Mammary epithelial cell (primary cell): ENCODE measurements at regions of chrX and their contacts with region 1.

Region 1: DNA sequence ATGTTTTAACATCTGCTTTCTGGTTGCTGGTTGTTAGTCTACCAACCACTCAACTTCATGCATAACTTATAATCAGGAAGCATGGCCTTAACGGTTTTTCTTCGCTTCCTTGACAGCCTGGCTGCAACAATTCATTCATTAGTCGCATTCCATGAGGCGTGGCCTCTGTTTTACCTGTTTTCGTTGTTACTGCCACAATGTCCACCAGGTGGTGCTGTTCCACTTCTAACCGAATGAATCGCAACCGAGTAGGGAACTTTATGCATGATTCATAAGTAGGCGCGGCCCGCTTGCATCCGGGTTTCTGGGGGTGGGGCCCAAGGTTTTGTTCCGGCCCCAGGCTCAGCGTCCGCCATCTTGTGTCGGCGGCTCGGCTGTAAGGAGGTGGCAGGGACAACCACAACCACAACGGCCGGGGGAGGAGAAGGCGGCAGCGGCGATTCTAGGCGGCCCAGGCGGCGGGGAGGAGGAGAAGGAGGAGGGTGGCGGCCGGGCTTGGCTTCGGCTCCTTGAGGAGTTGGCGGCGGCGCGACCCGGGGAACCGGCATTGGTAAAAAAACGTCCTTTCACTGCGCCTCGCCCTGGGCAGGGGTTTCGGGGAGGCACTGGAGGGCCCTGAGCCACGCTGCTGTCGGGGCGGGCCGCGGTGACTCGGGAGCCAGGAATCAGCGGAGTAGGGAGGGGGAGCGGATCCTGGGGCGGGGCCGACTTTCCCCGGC is at the start of gene UBA1:
- DNase-seq: peak; percentile 96
- H3K4me3 ChIP-seq: peak within 1 kb of the TSS; percentile 74 to 92 (median 76)
- H3K27ac ChIP-seq: peak within 1 kb of the TSS; percentile 81
- H3K4me1 ChIP-seq: peaks cover 44% of the 10 kb centered on the region
- H3K27me3 ChIP-seq: no peaks in the 10 kb centered on the region
- CTCF ChIP-seq: peak; percentile 79 to 87
- total RNA-seq, gene UBA1: 231 to 360 TPM

Region 2: GRCh38 chrX:47112316-47112954 is 81.2 kb before region 1 on chrX:
- CTCF ChIA-PET with region 1: no interaction called
- dilution Hi-C with region 1: no loop called
- in situ Hi-C with region 1: no loop called
- intact Hi-C with region 1: loop called (anchors 1 kb)
- DNase-seq: peak; percentile 55
- H3K4me3 ChIP-seq: no peak overlapping the region
- H3K27ac ChIP-seq: no peak overlapping the region
- H3K4me1 ChIP-seq: no peaks in the 10 kb centered on the region
- H3K27me3 ChIP-seq: no peaks in the 10 kb centered on the region
- CTCF ChIP-seq: peak in 1 of 2 donors; percentile 34

Region 3: GRCh38 chrX:47217642-47218279 is 24.1 kb after region 1 on chrX:
- CTCF ChIA-PET with region 1: no interaction called
- dilution Hi-C with region 1: no loop called
- in situ Hi-C with region 1: no loop called
- intact Hi-C with region 1: loop called (anchors 1 kb)
- DNase-seq: peak; percentile 100
- H3K4me3 ChIP-seq: peak overlapping the region; percentile 63 to 68 (median 68)
- H3K27ac ChIP-seq: peak overlapping the region; percentile 95
- H3K4me1 ChIP-seq: peaks cover 26% of the 10 kb centered on the region
- H3K27me3 ChIP-seq: no peaks in the 10 kb centered on the region
- CTCF ChIP-seq: no peak

Region 4: DNA sequence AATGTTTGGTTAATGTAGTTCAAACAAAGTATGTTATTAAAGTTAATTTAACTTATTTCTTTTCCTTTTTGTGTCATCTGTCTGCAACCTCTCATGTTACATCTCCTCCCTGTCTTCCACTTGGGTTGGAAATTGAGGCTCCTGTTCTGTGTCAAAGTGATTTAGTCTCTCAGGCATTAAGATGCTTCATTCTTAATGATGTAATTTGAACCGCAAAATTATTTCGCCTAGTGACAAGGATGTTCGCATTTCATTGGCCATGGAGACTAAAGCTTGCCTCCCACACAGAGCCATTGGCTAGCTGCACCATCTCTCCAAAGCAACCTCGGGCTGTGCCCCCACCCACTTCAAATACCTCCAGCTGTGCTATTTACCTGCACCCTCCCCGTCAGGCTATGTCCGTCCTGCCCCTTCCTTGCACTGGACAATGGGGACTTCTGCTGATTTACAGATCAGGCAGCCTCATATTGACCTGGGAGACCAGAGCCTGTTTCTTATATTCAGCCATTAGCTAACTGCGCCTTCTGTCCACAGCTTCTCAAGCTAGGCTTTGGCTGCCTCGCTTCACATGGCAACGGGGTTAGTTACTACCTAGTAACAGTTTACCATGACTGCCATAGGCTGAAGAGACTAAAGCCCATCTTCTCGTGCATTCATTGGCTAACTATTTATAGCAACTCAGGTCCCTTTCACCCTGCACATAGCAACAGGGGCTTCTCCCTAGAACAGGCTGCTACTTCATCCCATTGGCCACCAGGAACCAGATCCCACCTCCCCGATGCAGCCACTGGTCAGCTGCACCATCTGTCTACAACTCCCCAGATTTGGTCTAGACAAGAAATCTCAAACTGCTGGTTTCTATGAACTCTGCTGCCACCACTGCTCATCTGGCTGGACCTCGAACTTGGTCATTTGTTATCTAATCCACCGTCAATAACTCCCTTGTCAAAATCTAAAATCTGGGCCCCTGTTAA is 168.2 kb after region 1 on chrX:
- CTCF ChIA-PET with region 1: no interaction called
- dilution Hi-C with region 1: no loop called
- in situ Hi-C with region 1: no loop called
- intact Hi-C with region 1: no loop called
- DNase-seq: peak; percentile 86
- H3K4me3 ChIP-seq: peak overlapping the region; percentile 11 to 44 (median 22)
- H3K27ac ChIP-seq: peak overlapping the region; percentile 65
- H3K4me1 ChIP-seq: no peaks in the 10 kb centered on the region
- H3K27me3 ChIP-seq: no peaks in the 10 kb centered on the region
- CTCF ChIP-seq: peak in 1 of 2 donors; percentile 11

Region 5: DNA sequence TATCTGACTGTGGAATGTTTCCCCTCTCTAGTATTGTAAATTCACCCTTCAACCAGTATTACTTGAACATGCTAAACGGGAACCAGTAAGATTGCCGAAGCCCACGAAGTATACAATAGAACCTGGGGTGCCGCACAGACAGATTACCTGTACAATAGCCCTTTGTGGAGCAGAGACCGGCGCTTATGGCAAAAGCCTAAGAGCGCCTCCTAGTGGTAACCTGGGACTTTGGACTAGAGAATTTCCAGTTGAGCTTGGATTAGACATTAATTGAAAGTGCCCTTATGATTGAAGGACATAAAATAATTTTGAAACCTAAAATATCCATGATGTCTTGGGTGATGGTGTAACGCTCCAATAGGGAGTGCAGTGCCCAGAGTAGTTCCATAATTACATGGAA is 190.9 kb after region 1 on chrX:
- CTCF ChIA-PET with region 1: no interaction called
- dilution Hi-C with region 1: no loop called
- in situ Hi-C with region 1: loop called in 1 of 2 experiments (anchors 10 kb)
- intact Hi-C with region 1: loop called (anchors 1 kb)
- DNase-seq: peak; percentile 56
- H3K4me3 ChIP-seq: no peak overlapping the region
- H3K27ac ChIP-seq: no peak overlapping the region
- H3K4me1 ChIP-seq: no peaks in the 10 kb centered on the region
- H3K27me3 ChIP-seq: no peaks in the 10 kb centered on the region
- CTCF ChIP-seq: peak; percentile 63 to 74

Region 6: DNA sequence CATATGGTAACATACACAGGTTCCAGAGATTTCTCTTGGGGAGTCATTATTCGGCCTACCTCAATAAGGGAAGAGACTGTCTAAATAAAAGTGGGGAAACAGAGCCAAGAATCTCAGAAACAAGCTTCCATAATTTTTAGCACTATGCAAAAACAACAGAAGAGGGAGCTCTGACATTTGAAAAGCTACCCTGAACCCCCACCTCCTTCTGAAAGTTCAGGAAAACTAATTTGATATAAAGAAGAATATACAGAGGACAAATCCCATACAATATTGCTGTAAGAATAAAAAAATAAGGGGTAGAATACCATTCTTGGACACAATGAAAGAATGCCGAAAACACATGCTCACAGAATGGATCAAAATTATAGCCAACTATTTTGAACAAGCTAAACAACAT is 303.6 kb after region 1 on chrX:
- CTCF ChIA-PET with region 1: interaction called, 6 read pairs
- dilution Hi-C with region 1: no loop called
- in situ Hi-C with region 1: no loop called
- intact Hi-C with region 1: loop called (anchors 5 kb)
- DNase-seq: no peak
- H3K4me3 ChIP-seq: no peak overlapping the region
- H3K27ac ChIP-seq: no peak overlapping the region
- H3K4me1 ChIP-seq: peaks cover 6% of the 10 kb centered on the region
- H3K27me3 ChIP-seq: no peaks in the 10 kb centered on the region
- CTCF ChIP-seq: peak in 1 of 2 donors; percentile 49

Region 7: GRCh38 chrX:47836164-47837072 is 642.8 kb after region 1 on chrX and contains the start of gene ZNF81:
- CTCF ChIA-PET with region 1: no interaction called
- dilution Hi-C with region 1: no loop called
- in situ Hi-C with region 1: no loop called
- intact Hi-C with region 1: loop called (anchors 10 kb)
- DNase-seq: peak; percentile 94
- H3K4me3 ChIP-seq: peak within 1 kb of the TSS; percentile 55 to 59 (median 56)
- H3K27ac ChIP-seq: peak within 1 kb of the TSS; percentile 59
- H3K4me1 ChIP-seq: no peaks in the 10 kb centered on the region
- H3K27me3 ChIP-seq: no peaks in the 10 kb centered on the region
- CTCF ChIP-seq: no peak
- total RNA-seq, gene ZNF81: 6.1 to 7.8 TPM